ENCODE measurements at regions of chr9 and their contacts with region 1.

Region 1: GRCh38 chr9:71911253-71912074 is at the start of gene C9orf85:
- DNase-seq: peak; percentile 98
- H3K4me3 Mint-ChIP-seq: peak within 1 kb of the TSS; percentile 97
- H3K27ac Mint-ChIP-seq: peak within 1 kb of the TSS; percentile 94
- H3K4me1 Mint-ChIP-seq: peaks cover 59% of the 10 kb centered on the region
- H3K27me3 Mint-ChIP-seq: no peaks in the 10 kb centered on the region
- total RNA-seq, gene C9orf85: 10.8 to 12.1 TPM

Region 2: DNA sequence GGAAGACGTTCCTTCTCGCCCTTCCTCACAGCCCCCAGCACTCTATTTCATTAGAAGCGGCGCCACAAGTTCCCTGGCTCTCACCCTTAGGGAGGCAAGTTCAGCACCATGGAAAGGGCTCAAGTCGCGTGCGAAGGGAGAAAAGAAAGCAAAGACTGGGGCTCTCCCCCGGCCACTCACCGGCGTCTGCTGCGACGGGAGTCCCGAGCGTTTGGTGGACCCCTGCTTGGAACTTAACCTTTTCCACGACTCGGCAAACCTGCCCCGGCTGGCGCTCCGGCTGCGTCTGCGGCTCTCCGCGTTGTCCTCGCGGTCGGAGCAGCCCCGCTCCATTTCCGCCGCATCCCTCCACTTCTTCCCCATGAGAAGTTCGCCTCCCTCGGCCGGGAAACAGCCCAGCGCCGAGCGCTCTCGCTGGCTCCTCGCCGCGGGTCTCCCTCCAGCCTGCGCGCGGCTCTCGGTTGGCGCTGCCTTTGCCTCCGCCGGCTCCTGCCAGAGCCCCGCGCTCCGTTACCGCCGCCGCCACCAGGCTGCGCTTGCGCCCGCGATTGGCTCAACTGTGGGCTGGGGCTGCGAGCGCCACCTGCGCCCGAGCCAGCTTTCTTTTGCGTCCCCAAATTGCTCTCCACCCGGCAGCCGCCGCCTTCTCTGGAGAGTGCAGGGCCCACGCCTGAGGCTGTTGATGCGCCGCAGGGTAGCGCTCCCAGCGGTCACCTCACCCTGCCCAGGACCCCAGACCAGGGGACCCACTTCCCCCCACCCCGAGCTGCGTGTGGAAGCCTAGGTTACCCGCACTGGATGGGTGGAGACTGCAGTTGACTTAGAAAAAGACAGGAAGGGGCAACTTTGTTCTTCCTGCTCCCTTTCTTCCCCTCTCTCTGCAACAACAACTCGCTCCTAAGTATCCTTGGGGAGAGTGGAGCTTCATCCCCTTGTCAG is 464.7 kb before region 1 on chr9:
- CTCF ChIA-PET with region 1: no interaction called
- POLR2A ChIA-PET with region 1: no interaction called
- DNase-seq: peak; percentile 43
- H3K4me3 Mint-ChIP-seq: no peak overlapping the region
- H3K27ac Mint-ChIP-seq: no peak overlapping the region
- H3K4me1 Mint-ChIP-seq: no peaks in the 10 kb centered on the region
- H3K27me3 Mint-ChIP-seq: peaks cover 37% of the 10 kb centered on the region

Region 3: DNA sequence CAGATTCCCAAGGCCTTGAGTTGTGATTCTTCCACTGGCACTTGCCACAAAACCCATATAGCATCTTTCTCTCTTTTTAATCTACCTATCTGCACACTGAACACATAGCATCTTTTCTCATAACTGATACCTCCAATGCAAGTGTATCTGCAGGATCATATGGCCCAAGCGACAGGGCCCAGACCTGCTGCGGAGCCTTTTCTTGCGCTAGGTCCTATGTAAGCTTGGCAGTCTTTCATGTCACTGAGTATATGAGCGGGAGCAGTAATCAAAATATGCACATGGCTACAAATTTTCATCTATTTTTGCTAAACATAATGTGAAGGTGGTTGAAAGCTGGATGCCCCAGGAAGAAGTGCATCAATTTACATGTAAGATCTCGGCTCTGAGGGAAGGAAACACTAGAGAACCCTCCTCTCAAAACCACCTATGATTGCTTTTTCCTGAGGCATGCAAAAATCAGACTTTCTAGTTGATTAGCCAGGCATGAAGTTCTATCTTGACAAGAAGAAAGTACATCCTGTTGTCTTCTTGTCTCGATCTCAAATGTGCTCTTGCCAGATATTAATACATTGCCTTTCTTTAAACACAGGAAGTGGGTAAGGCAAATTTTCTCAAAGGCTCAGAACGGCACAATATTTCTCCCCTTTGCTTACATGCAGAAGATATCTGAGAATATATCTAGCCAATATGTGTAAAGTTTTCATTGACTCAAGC is 116.2 kb before region 1 on chr9:
- CTCF ChIA-PET with region 1: interaction called, 4 read pairs
- POLR2A ChIA-PET with region 1: interaction called, 12 read pairs
- DNase-seq: no peak
- H3K4me3 Mint-ChIP-seq: peak overlapping the region; percentile 56
- H3K27ac Mint-ChIP-seq: peak overlapping the region; percentile 98
- H3K4me1 Mint-ChIP-seq: peaks cover 46% of the 10 kb centered on the region
- H3K27me3 Mint-ChIP-seq: no peaks in the 10 kb centered on the region

Region 4: DNA sequence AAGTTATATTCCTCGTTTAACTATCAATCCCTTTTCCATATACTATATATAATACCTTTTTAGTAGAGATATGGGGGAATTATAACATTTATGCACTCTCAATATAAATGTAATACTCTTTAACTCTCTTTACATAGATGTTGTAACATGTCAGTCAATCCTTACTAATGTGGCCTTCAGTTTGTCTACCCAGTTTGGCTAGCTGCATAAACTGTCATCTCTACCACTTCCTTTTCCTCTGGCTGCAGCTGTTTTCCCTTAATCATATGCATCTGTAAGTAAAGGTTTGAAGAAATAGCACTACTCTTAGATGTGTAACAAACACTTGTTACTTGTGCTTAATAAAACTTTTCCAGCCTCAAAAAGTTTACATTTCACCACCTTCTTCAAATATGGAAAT is 13.9 kb before region 1 on chr9:
- CTCF ChIA-PET with region 1: interaction called, 16 read pairs
- POLR2A ChIA-PET with region 1: interaction called, 41 read pairs
- DNase-seq: peak; percentile 41
- H3K4me3 Mint-ChIP-seq: no peak overlapping the region
- H3K27ac Mint-ChIP-seq: peak overlapping the region; percentile 41
- H3K4me1 Mint-ChIP-seq: peaks cover 77% of the 10 kb centered on the region
- H3K27me3 Mint-ChIP-seq: no peaks in the 10 kb centered on the region

Measured in activated CD4-positive, alpha-beta memory T cell treated with anti-CD3 and anti-CD28 coated beads, Interleukin-2, amount 10 ng/mL, durations not matched to agents 7 days and 5 days (primary cell).